ENCODE measurements at regions of chr4 and their contacts with region 1.

Region 1: DNA sequence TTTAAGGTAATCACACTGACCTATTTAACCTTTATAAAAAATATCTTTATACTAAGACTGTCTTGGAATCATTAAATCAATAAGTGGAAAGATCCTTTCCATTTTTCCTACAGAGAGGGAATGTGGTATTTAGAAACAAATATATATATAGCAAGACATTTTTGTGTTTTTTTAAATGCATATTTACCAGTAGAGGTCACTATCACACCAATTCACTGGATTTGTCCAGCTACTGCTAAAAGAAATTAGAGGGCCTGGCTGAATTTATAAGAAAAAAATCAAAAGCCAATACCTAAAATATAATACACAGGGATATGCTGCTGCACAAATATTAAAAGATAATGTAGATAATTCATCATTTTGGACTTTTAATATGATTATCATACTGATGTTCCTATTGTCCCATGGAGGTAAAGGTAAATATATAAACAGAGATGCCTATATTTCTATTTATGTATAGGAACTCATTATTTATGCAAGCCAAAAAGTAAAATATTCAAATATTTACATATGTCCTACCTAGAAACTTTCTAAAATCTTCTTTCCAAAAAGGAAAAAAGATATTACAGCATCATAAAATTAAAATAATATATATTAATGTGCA is 69.5 kb downstream of the PDE5A start:
- DNase-seq: no peak
- H3K4me3 ChIP-seq: no peak overlapping the region
- H3K27ac ChIP-seq: no peak overlapping the region
- H3K27me3 ChIP-seq: no peaks in the 10 kb centered on the region
- CTCF ChIP-seq: peak; percentile 45

Region 2: DNA sequence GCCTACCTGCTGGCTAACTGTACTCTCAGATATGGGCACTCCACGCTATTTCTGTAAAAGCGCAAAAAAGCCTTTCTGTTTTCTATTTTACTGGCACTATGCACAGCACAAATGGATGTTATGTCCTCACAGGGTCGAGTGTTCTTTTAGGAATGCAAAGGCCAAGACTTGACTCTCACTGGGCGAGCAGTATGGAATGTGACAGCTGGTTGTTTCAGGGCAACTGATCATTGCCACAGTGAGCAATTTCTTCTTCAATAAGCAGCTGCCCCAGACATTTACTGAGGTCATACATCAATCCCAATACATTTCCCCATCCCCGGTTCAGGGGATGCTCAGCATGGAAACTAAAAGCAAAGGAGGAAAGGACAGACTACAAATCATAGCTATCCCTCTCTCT is 11.3 kb after region 1 on chr4:
- CTCF ChIA-PET with region 1: interaction called, 15 read pairs
- POLR2A ChIA-PET with region 1: no interaction called
- DNase-seq: peak; percentile 34
- H3K4me3 ChIP-seq: no peak overlapping the region
- H3K27ac ChIP-seq: peak overlapping the region; percentile 53
- H3K27me3 ChIP-seq: no peaks in the 10 kb centered on the region
- CTCF ChIP-seq: no peak